Natural killer cell (primary cell): ENCODE measurements at regions of chr1 and their contacts with region 1.

Region 1: DNA sequence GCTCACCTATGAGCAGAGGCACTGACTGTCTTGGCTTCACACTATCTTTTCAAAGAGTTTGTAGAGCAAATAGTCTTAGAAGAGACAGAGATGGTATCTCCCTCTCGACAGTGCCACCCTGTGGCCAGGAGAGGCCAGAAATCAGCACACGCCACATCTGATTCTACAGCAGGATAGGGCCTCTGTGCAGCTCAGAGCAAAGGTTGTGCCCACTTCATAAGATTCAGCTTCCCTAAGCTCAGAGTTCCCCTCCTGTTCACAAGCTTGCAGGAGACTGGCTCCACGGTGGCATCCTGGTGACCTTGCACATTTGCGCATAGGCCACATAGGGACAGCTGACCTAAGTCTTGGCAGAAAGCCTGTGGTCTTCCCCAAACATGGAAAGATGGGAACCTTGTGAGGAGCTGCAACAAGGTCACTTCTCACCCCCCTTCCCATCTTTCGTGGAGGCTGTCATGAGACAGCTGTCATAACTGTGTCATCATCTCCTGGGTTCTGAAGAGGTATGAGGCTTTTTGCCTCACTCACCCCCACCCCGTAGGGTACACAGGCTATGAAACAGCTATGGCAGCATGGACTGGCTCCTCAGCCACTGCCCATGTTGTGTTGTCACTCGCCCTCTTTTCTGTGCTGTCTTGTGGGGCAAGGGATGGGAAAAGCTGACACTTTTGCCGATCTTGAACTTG is 3.0 kb downstream of the ITLN2 start:
- DNase-seq: peak; percentile 58 to 85
- ATAC-seq: peak; percentile 83 to 84 (median 84)
- H3K4me3 ChIP-seq: no peak overlapping the region
- H3K4me3 Mint-ChIP-seq: no peak overlapping the region
- H3K27ac ChIP-seq: no peak overlapping the region
- H3K27ac Mint-ChIP-seq: no peak overlapping the region
- H3K4me1 ChIP-seq: peaks cover 15% of the 10 kb centered on the region
- H3K4me1 Mint-ChIP-seq: peaks cover 27 to 30% of the 10 kb centered on the region in 2 donors
- H3K27me3 ChIP-seq: no peaks in the 10 kb centered on the region
- H3K27me3 Mint-ChIP-seq: peaks cover 2 to 15% of the 10 kb centered on the region in 2 donors
- CTCF ChIP-seq: peak; percentile 68

Region 2: DNA sequence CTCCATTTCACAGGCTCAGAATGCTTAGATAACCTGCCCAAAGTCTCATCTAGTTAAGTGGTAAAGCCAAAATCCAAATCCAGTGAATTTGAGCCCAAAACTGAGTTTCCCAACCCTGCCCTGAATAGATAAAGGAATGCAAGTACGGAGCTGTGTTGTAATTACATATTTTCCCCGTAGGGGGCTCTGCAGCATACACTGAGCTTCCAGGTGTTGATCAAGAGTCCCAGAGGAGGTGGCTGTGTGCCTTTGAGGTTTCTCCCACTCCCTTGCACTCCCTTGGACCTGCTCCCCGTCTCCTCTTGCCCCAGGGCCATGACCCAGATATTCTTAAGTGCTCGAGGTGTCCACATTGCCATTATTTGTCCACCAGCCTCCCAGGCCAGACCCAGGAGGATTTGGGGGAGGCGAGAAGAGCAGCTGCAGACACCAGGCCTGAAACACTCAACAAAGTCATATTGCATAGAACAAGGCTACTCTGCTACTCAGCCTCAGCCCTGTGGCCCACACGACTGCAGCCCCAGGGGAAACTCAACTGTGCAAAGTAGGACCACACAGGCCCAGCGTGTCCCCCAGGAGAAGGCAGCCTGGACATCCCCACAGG is 174.0 kb before region 1 on chr1:
- intact Hi-C with region 1: loop called (anchors 5 kb)
- DNase-seq: peak in 1 of 2 donors; percentile 81
- ATAC-seq: peak; percentile 57 to 80 (median 68)
- H3K4me3 ChIP-seq: no peak overlapping the region
- H3K4me3 Mint-ChIP-seq: no peak overlapping the region
- H3K27ac ChIP-seq: no peak overlapping the region
- H3K27ac Mint-ChIP-seq: no peak overlapping the region
- H3K4me1 ChIP-seq: peaks cover 14% of the 10 kb centered on the region
- H3K4me1 Mint-ChIP-seq: peaks cover 0 to 12% of the 10 kb centered on the region in 2 donors
- H3K27me3 ChIP-seq: no peaks in the 10 kb centered on the region
- H3K27me3 Mint-ChIP-seq: no peaks in the 10 kb centered on the region
- CTCF ChIP-seq: peak; percentile 53

Region 3: GRCh38 chr1:160868141-160868540 is 83.4 kb before region 1 on chr1:
- intact Hi-C with region 1: no loop called
- DNase-seq: no peak
- ATAC-seq: peak in 2 of 3 donors; percentile 31 to 62
- H3K4me3 ChIP-seq: no peak overlapping the region
- H3K4me3 Mint-ChIP-seq: no peak overlapping the region
- H3K27ac ChIP-seq: no peak overlapping the region
- H3K27ac Mint-ChIP-seq: no peak overlapping the region
- H3K4me1 ChIP-seq: peaks cover 14% of the 10 kb centered on the region
- H3K4me1 Mint-ChIP-seq: peaks cover 19 to 27% of the 10 kb centered on the region in 2 donors
- H3K27me3 ChIP-seq: no peaks in the 10 kb centered on the region
- H3K27me3 Mint-ChIP-seq: no peaks in the 10 kb centered on the region
- CTCF ChIP-seq: no peak